PC-3 (cell line): ENCODE measurements at regions of chr3 and their contacts with region 1.

Region 1: GRCh38 chr3:48151058-48151806 is 37.0 kb downstream of the CDC25A start:
- DNase-seq: peak; percentile 89
- ATAC-seq: peak; percentile 87
- H3K4me3 ChIP-seq: peak overlapping the region; percentile 23; the same call in 1 of the 2 replicates
- H3K27ac ChIP-seq: peak overlapping the region; percentile 60
- H3K4me1 ChIP-seq: peaks cover 35% of the 10 kb centered on the region
- H3K27me3 ChIP-seq: no peaks in the 10 kb centered on the region
- CTCF ChIP-seq: peak; percentile 97

Region 2: DNA sequence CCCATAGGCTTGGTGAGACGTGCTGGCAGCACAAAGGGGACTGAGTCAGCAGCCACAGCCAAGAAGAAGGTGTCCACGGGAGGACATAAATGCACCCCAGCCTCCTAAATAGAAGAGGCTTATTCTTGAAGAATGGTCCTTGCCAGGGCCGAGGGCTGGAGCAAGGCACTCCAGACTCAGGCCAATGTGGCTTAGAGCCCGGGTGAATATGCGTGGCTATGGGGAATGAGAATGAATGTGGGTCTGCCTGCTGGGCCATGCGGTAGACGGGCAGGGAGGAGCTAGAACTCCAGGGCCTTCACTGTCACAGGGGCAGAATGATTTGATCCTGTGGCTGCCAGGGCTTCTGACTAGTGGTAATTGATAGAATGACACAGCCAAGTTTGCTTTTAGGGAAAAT is 314.2 kb before region 1 on chr3:
- CTCF ChIA-PET with region 1: interaction called, 14 read pairs
- POLR2A ChIA-PET with region 1: no interaction called
- intact Hi-C with region 1: loop called (anchors 1 kb)
- DNase-seq: no peak
- ATAC-seq: no peak
- H3K4me3 ChIP-seq: no peak overlapping the region
- H3K27ac ChIP-seq: no peak overlapping the region
- H3K4me1 ChIP-seq: no peaks in the 10 kb centered on the region
- H3K27me3 ChIP-seq: no peaks in the 10 kb centered on the region
- CTCF ChIP-seq: no peak

Region 3: GRCh38 chr3:47865192-47865591 is 286.0 kb before region 1 on chr3:
- CTCF ChIA-PET with region 1: interaction called, 11 read pairs
- POLR2A ChIA-PET with region 1: no interaction called
- intact Hi-C with region 1: loop called (anchors 5 kb)
- DNase-seq: no peak
- ATAC-seq: peak; percentile 56
- H3K4me3 ChIP-seq: no peak overlapping the region
- H3K27ac ChIP-seq: no peak overlapping the region
- H3K4me1 ChIP-seq: no peaks in the 10 kb centered on the region
- H3K27me3 ChIP-seq: no peaks in the 10 kb centered on the region
- CTCF ChIP-seq: no peak

Region 4: DNA sequence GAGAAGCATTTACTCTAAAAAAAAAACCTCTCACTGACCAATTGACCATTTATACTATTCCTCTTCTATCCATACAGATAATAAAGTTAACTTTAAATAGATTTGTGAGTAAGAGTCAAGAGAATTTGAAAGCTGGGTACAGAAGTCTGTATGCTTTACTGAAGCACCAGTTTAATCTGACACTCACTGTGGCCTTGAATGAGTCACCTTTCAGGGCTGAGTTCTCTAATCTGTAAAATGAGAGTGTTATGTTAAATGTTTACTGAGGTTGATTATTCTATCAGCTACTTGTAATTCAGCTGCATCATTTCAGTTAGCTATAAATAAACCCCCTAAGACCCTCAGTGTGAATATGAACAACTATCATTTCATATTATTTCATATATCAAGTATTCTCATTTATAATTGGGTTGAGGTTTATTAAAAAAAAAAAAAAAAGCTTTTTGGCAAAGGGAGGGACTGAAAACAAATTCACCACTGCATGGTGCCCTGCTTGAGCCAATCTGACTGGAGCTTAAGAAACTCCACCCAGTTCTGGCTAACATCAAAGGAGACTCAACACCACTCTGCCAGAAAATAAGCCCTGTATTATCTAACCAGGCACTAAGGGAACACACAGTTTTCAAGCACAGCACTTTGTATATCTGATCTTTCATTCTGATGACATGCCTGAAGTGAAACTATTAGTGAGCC is 137.8 kb before region 1 on chr3:
- CTCF ChIA-PET with region 1: interaction called, 3 read pairs
- POLR2A ChIA-PET with region 1: no interaction called
- intact Hi-C with region 1: loop called (anchors 1 kb)
- DNase-seq: peak; percentile 74
- ATAC-seq: peak; percentile 91
- H3K4me3 ChIP-seq: no peak overlapping the region
- H3K27ac ChIP-seq: no peak overlapping the region
- H3K4me1 ChIP-seq: peaks cover 27% of the 10 kb centered on the region
- H3K27me3 ChIP-seq: no peaks in the 10 kb centered on the region
- CTCF ChIP-seq: no peak

Region 5: GRCh38 chr3:48135552-48136495 is 15.4 kb before region 1 on chr3:
- CTCF ChIA-PET with region 1: interaction called, 12 read pairs
- POLR2A ChIA-PET with region 1: no interaction called
- intact Hi-C with region 1: no loop called
- DNase-seq: no peak
- ATAC-seq: no peak
- H3K4me3 ChIP-seq: no peak overlapping the region
- H3K27ac ChIP-seq: no peak overlapping the region
- H3K4me1 ChIP-seq: no peaks in the 10 kb centered on the region
- H3K27me3 ChIP-seq: no peaks in the 10 kb centered on the region
- CTCF ChIP-seq: no peak